Panc1 (cell line): ENCODE measurements at regions of chr11 and their contacts with region 1.

Region 1: GRCh38 chr11:78268591-78269410 is 80.1 kb downstream of the USP35 start:
- DNase-seq: no peak
- ATAC-seq: no peak
- H3K4me3 ChIP-seq: no peak overlapping the region
- H3K27ac ChIP-seq: no peak overlapping the region
- H3K4me1 ChIP-seq: no peaks in the 10 kb centered on the region
- H3K27me3 ChIP-seq: no peaks in the 10 kb centered on the region
- CTCF ChIP-seq: no peak

Region 2: GRCh38 chr11:77959434-77959833 is 309.4 kb before region 1 on chr11:
- CTCF ChIA-PET with region 1: no interaction called
- POLR2A ChIA-PET with region 1: interaction called, 10 read pairs
- in situ Hi-C with region 1: no loop called
- intact Hi-C with region 1: no loop called
- DNase-seq: no peak
- ATAC-seq: no peak
- H3K4me3 ChIP-seq: no peak overlapping the region
- H3K27ac ChIP-seq: no peak overlapping the region
- H3K4me1 ChIP-seq: no peaks in the 10 kb centered on the region
- H3K27me3 ChIP-seq: no peaks in the 10 kb centered on the region
- CTCF ChIP-seq: no peak

Region 3: DNA sequence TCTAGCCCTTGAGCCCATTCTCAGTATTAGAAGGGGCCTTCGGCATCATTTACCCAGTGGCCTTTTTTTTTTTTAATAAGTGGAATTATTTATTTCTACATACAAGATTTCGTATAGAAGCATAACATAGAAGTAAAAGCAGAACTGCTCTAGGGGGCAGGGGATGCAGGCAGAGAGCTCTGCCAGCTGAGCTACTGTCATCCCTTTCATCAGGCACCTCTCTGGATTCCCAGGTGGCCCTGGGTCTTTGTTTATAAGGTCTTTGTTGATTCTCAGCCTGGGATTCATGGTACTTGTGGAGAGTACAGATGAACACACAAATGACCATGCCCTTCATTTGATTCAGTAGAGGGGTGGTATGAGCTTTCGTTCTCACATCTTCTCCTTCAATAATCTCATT is 82.4 kb after region 1 on chr11:
- CTCF ChIA-PET with region 1: no interaction called
- POLR2A ChIA-PET with region 1: interaction called, 14 read pairs
- in situ Hi-C with region 1: no loop called
- intact Hi-C with region 1: no loop called
- DNase-seq: no peak
- ATAC-seq: peak; percentile 12; the same call in 1 of the 2 replicates
- H3K4me3 ChIP-seq: peak overlapping the region in 1 of 2 experiments; percentile 17; a peak in 2 of 4 replicates
- H3K27ac ChIP-seq: peak overlapping the region; percentile 78
- H3K4me1 ChIP-seq: peaks cover 23% of the 10 kb centered on the region
- H3K27me3 ChIP-seq: no peaks in the 10 kb centered on the region
- CTCF ChIP-seq: no peak

Region 4: GRCh38 chr11:78595436-78596130 is 326.8 kb after region 1 on chr11:
- CTCF ChIA-PET with region 1: no interaction called
- POLR2A ChIA-PET with region 1: interaction called, 16 read pairs
- in situ Hi-C with region 1: no loop called
- intact Hi-C with region 1: no loop called
- DNase-seq: no peak
- ATAC-seq: no peak
- H3K4me3 ChIP-seq: no peak overlapping the region
- H3K27ac ChIP-seq: no peak overlapping the region
- H3K4me1 ChIP-seq: no peaks in the 10 kb centered on the region
- H3K27me3 ChIP-seq: no peaks in the 10 kb centered on the region
- CTCF ChIP-seq: no peak

Region 5: DNA sequence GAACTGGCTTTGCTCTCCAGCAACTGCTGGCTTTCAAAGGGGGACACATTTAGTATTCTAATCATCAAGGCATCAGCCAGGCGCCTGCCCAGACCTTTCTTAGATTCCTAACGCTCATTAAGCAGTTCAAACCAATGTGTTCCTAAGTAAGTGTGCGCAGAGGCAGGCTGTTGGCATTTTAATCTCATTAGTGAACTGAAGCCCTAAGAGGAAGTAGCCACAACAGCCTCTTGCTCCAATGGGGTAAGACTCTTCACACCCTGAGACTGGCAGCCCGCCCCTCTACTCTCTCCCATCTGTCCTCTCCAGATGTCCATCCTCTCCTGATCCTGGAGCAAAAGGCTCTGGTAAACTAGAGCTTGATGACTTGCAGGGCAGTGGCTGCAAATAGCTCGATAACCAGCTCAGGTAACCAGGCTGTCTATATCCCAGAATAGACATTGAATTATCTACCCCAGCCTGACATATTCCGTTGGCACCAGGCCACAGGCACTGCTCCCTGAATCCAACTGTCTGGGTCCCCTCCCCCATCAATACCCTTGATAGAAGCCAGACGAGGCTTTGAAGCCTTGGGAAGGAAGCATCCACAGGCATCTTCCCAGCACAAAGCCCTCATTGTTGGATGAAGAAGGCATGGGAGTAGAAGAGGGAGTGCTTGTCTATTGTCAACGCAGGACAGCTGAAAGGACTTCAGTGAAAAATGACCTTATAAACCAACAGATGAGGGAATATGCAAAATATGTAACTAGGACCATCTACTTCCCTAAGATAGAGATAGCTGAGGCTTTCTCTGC is 850.9 kb after region 1 on chr11:
- CTCF ChIA-PET with region 1: no interaction called
- POLR2A ChIA-PET with region 1: no interaction called
- in situ Hi-C with region 1: no loop called
- intact Hi-C with region 1: no loop called
- DNase-seq: no peak
- ATAC-seq: no peak
- H3K4me3 ChIP-seq: no peak overlapping the region
- H3K27ac ChIP-seq: no peak overlapping the region
- H3K4me1 ChIP-seq: no peaks in the 10 kb centered on the region
- H3K27me3 ChIP-seq: no peaks in the 10 kb centered on the region
- CTCF ChIP-seq: no peak